MCF 10A (cell line): ENCODE measurements at regions of chr21 and their contacts with region 1.

Region 1: GRCh38 chr21:33924079-33924765 is 8.6 kb upstream of the ATP5PO start:
- DNase-seq: peak; percentile 89
- H3K4me3 Mint-ChIP-seq: no peak overlapping the region
- H3K27ac Mint-ChIP-seq: peak overlapping the region; percentile 53
- H3K4me1 Mint-ChIP-seq: peaks cover 6% of the 10 kb centered on the region
- H3K27me3 Mint-ChIP-seq: no peaks in the 10 kb centered on the region
- CTCF ChIP-seq: peak; percentile 87

Region 2: GRCh38 chr21:33751120-33751519 is 173.1 kb before region 1 on chr21:
- CTCF ChIA-PET with region 1: no interaction called
- POLR2A ChIA-PET with region 1: no interaction called
- intact Hi-C with region 1: no loop called
- DNase-seq: no peak
- H3K4me3 Mint-ChIP-seq: no peak overlapping the region
- H3K27ac Mint-ChIP-seq: no peak overlapping the region
- H3K4me1 Mint-ChIP-seq: no peaks in the 10 kb centered on the region
- H3K27me3 Mint-ChIP-seq: no peaks in the 10 kb centered on the region
- CTCF ChIP-seq: no peak

Region 3: DNA sequence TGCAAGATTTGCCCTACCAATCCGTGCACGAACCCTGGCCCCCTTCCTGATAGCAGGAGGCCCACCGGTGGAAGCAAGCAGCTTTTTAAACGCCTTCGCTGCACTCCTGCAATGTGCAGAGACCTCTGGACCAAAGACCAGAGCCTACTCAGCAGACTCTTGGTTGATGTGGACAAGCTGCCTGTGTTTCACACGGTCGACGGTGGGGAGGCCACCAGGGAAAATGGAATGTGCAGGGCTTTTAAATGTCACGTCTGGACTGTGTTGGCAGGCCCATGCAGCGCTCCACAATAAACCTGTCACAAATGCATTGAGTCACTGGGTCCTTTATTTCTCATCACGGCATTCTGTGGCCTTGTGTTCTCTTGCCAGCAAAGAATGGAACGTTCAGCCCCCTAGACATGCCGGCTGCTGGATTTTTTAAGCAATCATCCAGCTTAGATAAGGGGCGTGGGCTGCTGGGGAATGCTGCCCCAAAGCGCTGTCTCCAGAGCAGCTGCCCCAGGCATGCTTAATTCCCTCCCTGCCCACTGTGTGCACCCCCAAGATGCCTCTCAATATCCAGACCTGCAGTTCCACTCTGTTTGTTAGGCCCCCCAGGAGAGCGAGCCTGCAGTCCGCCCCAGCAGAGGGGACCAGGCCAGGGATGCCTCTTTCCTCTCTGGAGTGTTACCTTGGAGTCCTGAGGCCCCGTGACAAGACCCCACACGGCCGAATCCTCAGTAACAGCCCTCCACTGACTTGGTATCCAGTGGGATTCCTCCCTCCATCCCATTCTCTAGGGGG is 79.9 kb before region 1 on chr21:
- CTCF ChIA-PET with region 1: no interaction called
- POLR2A ChIA-PET with region 1: no interaction called
- intact Hi-C with region 1: no loop called
- DNase-seq: no peak
- H3K4me3 Mint-ChIP-seq: no peak overlapping the region
- H3K27ac Mint-ChIP-seq: no peak overlapping the region
- H3K4me1 Mint-ChIP-seq: peaks cover 17% of the 10 kb centered on the region
- H3K27me3 Mint-ChIP-seq: no peaks in the 10 kb centered on the region
- CTCF ChIP-seq: no peak

Region 4: GRCh38 chr21:33894736-33895288 is 29.4 kb before region 1 on chr21:
- CTCF ChIA-PET with region 1: no interaction called
- POLR2A ChIA-PET with region 1: no interaction called
- intact Hi-C with region 1: no loop called
- DNase-seq: peak; percentile 68
- H3K4me3 Mint-ChIP-seq: no peak overlapping the region
- H3K27ac Mint-ChIP-seq: no peak overlapping the region
- H3K4me1 Mint-ChIP-seq: peaks cover 7% of the 10 kb centered on the region
- H3K27me3 Mint-ChIP-seq: no peaks in the 10 kb centered on the region
- CTCF ChIP-seq: peak; percentile 36

Region 5: DNA sequence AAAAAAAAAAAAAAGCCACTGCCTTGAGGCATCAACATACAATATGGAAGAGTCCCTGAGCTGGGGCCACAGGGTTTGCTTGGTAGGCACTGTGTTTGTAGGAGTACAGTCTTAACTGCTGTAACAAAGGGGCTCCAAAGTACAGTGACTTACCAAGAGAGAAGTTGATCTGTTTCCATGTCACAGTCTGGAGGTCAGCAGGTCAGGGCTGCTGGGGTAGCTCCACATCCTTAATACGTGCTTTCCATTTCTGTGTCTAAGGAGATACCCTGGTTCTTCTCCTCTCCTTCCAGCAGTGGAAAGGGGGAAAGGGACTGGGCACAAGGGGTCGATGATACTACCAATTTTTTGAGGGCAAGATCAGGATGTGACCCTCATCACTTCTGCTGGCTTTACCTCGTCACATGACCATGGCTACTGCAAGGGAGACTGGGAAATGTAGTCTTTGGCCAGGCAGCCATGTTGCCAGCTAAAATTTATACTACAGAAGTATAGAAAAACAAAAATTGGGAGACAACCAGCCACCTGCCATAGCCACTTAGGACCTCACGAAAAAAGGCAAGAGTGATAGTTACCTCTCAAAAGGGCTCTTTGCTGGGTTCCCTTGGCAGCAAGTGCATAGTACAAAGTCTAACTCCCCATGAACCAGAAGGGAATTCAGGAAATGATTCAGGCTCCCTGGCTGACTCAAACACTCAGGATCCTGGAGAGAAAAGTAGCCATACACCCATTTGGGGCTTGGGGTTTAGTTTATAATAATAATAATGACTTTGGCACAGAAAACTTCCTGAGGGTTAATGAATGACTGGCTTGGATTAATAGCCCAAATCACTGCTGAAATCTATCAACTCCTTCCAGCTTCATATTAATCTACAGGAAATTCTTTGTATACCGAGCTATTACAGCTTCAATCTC is 44.1 kb after region 1 on chr21:
- CTCF ChIA-PET with region 1: interaction called, 17 read pairs
- POLR2A ChIA-PET with region 1: no interaction called
- intact Hi-C with region 1: no loop called
- DNase-seq: peak; percentile 55
- H3K4me3 Mint-ChIP-seq: no peak overlapping the region
- H3K27ac Mint-ChIP-seq: peak overlapping the region; percentile 79
- H3K4me1 Mint-ChIP-seq: peaks cover 24% of the 10 kb centered on the region
- H3K27me3 Mint-ChIP-seq: no peaks in the 10 kb centered on the region
- CTCF ChIP-seq: no peak

Region 6: DNA sequence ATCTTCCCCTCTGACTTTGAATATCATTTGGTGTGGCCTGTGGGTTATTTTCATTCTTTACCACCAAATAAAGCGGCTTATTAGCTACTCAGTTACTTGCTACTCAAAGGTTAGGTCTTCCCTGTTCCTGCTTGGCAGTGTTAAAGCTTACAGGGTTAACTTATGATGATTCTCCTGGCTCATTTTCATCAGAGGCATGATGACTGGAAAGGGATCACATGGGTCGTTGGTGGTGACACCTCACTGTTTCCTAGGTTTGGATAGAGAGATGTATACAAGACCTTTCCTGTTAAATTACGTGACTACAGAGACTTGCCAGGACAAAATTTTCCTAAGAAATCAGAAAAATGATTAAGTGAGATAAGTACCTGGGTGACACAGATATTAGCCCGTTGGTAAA is 176.6 kb after region 1 on chr21:
- CTCF ChIA-PET with region 1: interaction called, 13 read pairs
- POLR2A ChIA-PET with region 1: no interaction called
- intact Hi-C with region 1: no loop called
- DNase-seq: no peak
- H3K4me3 Mint-ChIP-seq: no peak overlapping the region
- H3K27ac Mint-ChIP-seq: peak overlapping the region; percentile 8
- H3K4me1 Mint-ChIP-seq: no peaks in the 10 kb centered on the region
- H3K27me3 Mint-ChIP-seq: no peaks in the 10 kb centered on the region
- CTCF ChIP-seq: no peak

Region 7: GRCh38 chr21:34243562-34243961 is 319.3 kb after region 1 on chr21:
- CTCF ChIA-PET with region 1: interaction called, 6 read pairs
- POLR2A ChIA-PET with region 1: no interaction called
- intact Hi-C with region 1: loop called (anchors 2 kb)
- DNase-seq: peak; percentile 51
- H3K4me3 Mint-ChIP-seq: no peak overlapping the region
- H3K27ac Mint-ChIP-seq: no peak overlapping the region
- H3K4me1 Mint-ChIP-seq: no peaks in the 10 kb centered on the region
- H3K27me3 Mint-ChIP-seq: peaks cover 9% of the 10 kb centered on the region
- CTCF ChIP-seq: peak; percentile 43

Region 8: GRCh38 chr21:34362136-34362444 is 437.9 kb after region 1 on chr21:
- CTCF ChIA-PET with region 1: interaction called, 237 read pairs
- POLR2A ChIA-PET with region 1: interaction called, 4 read pairs
- intact Hi-C with region 1: no loop called
- DNase-seq: no peak
- H3K4me3 Mint-ChIP-seq: peak overlapping the region; percentile 25
- H3K27ac Mint-ChIP-seq: no peak overlapping the region
- H3K4me1 Mint-ChIP-seq: peaks cover 6% of the 10 kb centered on the region
- H3K27me3 Mint-ChIP-seq: peaks cover 37% of the 10 kb centered on the region
- CTCF ChIP-seq: no peak